GM10248 (cell line): ENCODE measurements at regions of chr2 and their contacts with region 1.

Region 1: DNA sequence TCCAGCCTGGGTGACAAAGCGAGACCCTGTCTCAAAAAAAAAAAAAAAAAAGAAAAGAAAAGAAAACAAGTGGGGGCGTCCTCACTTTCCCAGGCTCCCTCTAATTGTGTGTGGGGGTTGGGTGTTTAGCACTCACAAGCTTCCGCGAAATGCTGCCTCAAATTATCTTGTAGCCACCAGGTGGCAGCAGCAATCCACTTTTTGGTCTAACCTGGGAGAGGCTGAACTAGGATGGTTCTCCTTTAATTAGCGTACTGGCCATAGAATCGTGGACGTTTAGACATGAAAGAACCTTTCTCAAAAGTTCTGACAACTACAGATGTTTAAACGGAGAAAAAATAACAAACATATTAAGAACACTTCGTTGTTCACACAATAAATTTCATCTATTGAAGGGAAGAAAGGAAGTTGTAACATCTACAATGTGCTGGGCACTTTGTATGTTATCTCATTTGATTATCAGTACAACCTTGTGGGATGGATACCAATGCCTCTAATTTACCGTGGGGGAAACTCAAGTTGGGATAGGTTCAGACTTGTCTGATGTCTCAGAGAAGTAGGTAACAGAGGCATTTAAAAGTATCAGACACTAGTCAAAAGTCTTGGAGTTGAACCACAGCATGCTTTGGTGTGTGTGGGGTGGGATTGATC is 122.7 kb upstream of the NABP1 start:
- DNase-seq: peak; percentile 77
- CTCF ChIP-seq: peak; percentile 78

Region 2: DNA sequence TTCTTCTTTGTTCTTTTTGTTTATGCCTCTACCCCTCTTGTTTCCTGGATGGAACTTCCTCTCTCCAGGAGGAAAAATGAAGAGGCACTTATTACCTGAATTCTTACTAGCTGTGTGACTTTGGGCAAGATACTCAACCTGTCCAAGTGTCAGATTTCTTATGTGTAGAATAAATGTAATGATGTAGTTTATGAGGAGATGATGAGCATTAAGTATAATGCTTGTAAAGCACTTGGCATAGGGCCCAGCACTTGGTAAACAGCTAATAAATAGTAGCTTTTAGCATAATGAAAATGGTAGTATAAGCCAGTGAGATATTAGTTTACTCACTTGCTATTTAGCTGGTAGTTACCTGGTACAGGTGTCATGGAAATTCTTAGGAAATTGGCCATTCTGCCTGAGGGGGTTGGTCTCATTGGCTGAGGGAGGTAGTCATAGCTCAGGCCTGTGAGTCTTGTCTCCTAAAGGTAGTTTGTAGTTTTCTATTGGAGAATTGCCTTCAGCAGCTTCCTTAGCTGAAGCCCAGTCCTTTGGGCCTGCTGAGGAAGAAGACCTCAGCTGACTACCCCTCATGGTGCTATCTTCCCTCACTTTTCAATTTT is 10.7 kb before region 1 on chr2:
- CTCF ChIA-PET with region 1: interaction called, 41 read pairs
- POLR2A ChIA-PET with region 1: no interaction called
- DNase-seq: no peak
- CTCF ChIP-seq: no peak

Region 3: GRCh38 chr2:191625016-191625415 is 69.8 kb after region 1 on chr2:
- CTCF ChIA-PET with region 1: no interaction called
- POLR2A ChIA-PET with region 1: no interaction called
- DNase-seq: no peak
- CTCF ChIP-seq: no peak

Region 4: DNA sequence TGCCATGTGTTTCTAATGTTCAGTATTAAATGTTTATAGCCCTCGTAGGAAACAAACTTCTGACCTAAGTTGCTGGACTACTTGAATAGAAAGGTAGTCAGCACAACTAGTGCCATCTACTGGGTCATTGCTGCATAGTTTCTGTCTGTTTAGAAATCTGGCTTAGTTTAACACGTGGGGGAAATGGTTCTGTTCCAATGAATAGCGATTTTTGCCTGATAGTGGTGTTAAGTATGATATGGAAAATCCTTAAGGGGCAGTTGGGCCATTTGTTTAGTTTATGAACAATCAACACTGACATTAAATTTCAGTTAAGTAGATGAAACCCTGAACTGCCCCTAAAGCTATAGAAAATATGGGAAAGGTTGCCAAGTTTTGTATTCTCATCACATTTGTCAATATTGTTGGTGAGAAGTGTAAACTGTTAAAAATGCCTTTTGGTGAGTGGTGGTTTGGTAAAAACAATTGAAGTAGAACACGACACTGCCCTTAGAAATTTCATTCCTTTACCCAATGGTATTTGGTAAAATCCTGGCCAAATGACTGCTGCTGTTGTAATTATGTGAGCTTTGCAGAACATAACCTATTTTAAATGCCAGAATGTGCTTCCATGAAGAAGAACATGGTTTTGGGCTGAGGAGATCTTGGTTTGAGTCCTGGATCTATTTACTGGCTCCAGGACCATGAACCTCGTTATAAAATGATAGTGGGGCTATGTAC is 136.0 kb after region 1 on chr2:
- CTCF ChIA-PET with region 1: interaction called, 13 read pairs
- POLR2A ChIA-PET with region 1: no interaction called
- DNase-seq: peak; percentile 69
- CTCF ChIP-seq: peak; percentile 61